ENCODE measurements at regions of chr20 and their contacts with region 1.

Region 1: DNA sequence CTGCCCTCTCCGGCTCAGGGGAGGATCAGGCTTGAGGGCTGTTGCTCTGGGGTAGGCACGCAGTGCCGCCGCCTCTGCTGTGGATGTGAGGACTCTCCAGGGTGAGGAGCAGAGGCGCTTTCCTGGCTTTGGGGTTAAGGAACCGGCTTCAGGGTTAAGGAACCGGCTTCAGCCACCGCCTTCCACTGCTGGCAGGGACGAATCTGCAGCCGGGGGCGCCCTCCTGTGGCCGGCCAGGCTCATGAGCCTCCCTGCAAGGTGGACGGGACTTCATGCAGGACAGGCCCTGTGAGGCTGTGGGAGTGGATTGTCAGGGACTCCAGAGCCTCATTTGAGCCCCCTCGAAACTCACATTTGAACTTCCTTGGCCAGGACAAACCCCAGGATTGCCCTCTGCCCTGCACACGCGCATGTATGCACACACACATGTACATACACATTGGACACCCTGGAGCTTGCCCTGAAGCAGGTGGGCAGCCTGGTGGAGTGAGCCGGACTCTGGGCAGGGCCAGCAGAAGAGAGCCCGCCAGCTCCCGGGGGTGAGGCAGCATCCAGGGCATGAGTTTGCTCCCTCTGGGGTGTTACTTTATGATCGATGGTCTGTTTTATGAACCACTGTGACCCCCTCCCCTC is 146.8 kb downstream of the PHACTR3 start:
- DNase-seq: peak; percentile 57 to 87 (median 74)
- ATAC-seq: peak; percentile 48 to 76 (median 69)
- H3K4me3 ChIP-seq: no peak overlapping the region
- H3K27ac ChIP-seq: peak overlapping the region in 1 of 12 donors; percentile 76
- H3K4me1 ChIP-seq: peaks cover 0 to 46% (median 20%) of the 10 kb centered on the region in 12 donors
- H3K27me3 ChIP-seq: peaks cover 0 to 57% (median 7%) of the 10 kb centered on the region in 9 donors
- CTCF ChIP-seq: peak; percentile 60 to 82 (median 77)
- POLR2A ChIP-seq: no peak

Region 2: DNA sequence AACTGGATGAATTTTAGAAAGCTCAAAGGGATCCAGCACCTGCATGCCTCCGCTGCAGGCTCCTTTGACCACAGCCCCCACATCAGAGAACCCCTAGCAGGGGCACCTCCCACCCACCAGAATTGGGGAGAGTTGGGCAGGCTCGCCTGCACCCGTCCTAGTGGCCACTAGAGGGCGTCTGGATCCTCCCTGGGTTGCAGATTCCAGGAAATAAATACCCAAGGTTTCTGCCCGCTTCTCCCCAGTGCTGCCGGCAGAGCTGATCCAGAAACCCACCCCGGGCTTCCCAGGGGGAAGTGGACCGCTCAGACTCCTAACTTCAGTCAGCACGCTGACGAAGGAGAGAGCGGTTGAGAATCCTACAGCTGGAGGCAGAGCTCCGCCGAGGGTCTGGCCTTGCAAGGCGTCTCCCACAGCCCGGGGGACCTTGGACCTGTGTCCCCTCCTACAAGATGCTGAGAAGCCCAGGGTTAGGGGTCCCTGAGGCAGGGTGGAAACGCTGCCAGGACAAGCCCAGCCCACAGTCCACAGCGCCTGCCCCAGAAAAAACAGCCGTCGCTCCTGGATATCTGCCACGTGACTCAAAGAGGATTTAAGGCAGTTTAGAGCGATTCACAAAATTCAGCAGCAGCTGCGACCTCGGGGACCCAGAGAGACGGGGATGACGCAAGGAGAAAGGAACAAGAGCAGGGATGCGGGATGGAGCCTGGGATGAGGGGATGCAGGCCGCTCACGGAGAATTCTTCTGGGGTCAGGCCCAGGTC is 179.4 kb before region 1 on chr20:
- intact Hi-C with region 1: loop called in 8 of 10 experiments (anchors 1 to 5 kb)
- DNase-seq: peak; percentile 47 to 77 (median 71)
- ATAC-seq: peak; percentile 44 to 77 (median 64)
- H3K4me3 ChIP-seq: peak overlapping the region in 11 of 12 donors; percentile 10 to 55 (median 43)
- H3K27ac ChIP-seq: peak overlapping the region in 8 of 12 donors; percentile 6 to 53 (median 40)
- H3K4me1 ChIP-seq: peaks cover 0 to 9% (median 0%) of the 10 kb centered on the region in 12 donors
- H3K27me3 ChIP-seq: peaks cover 0 to 56% (median 7%) of the 10 kb centered on the region in 9 donors
- CTCF ChIP-seq: peak; percentile 88 to 98 (median 96)
- POLR2A ChIP-seq: no peak

Region 3: GRCh38 chr20:59598625-59599310 is 152.4 kb before region 1 on chr20:
- intact Hi-C with region 1: loop called (anchors 1 to 5 kb)
- DNase-seq: peak in 2 of 5 donors; percentile 28 to 32
- ATAC-seq: peak in 3 of 4 donors; percentile 54 to 71 (median 68)
- H3K4me3 ChIP-seq: no peak overlapping the region
- H3K27ac ChIP-seq: no peak overlapping the region
- H3K4me1 ChIP-seq: peaks cover 0 to 6% (median 0%) of the 10 kb centered on the region in 12 donors
- H3K27me3 ChIP-seq: peaks cover 3 to 48% (median 18%) of the 10 kb centered on the region in 9 donors
- CTCF ChIP-seq: peak; percentile 48 to 78 (median 69)
- POLR2A ChIP-seq: no peak

Region 4: DNA sequence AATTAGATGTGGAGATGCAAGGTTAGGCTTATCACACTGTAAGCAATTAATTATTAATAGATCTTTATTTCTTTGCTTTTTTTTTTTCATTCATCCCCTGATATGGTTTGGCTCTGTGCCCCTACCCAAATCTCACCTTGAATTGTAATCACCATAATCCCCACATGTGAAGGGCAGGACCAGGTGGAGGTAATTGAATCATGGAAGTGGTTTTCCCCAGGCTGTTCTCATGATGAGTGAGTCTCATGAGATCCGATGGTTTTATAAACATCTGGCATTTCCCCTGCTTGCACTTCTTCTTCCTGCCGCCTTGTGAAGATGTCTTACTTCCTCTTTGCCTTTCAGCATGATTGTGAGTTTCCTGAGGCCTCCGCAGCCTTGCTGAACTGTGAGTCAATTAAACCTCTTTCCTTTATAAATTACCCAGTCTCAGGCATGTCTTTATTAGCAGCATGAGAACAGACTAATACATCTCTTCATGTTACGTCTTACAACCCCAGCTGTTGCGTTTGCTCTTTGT is 540.9 kb after region 1 on chr20:
- intact Hi-C with region 1: no loop called
- DNase-seq: no peak
- ATAC-seq: no peak
- H3K4me3 ChIP-seq: no peak overlapping the region
- H3K27ac ChIP-seq: no peak overlapping the region
- H3K4me1 ChIP-seq: no peaks in the 10 kb centered on the region
- H3K27me3 ChIP-seq: peaks cover 0 to 3% (median 0%) of the 10 kb centered on the region in 9 donors
- CTCF ChIP-seq: no peak
- POLR2A ChIP-seq: no peak

Region 5: DNA sequence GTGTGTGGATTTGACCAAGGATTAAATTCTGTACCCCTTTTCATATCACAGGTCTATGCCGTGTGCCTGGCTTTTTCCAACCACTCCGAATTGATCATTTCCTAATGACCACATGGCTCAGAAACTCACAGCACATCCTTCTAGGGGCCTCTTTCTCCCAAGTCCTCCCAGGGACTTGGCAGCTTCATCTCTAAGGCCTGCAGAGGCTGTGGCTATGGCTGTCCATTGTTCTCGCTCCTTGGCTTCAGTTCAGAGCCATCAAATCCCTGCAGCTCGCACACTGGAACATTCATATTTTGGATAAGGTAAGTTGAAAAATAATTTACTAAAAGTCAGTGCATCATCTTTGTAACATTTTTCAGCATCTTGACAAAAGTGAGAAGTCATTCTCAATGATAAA is 1003.7 kb after region 1 on chr20:
- intact Hi-C with region 1: no loop called
- DNase-seq: no peak
- ATAC-seq: no peak
- H3K4me3 ChIP-seq: no peak overlapping the region
- H3K27ac ChIP-seq: no peak overlapping the region
- H3K4me1 ChIP-seq: no peaks in the 10 kb centered on the region
- H3K27me3 ChIP-seq: no peaks in the 10 kb centered on the region
- CTCF ChIP-seq: no peak
- POLR2A ChIP-seq: no peak

Measured in heart left ventricle (tissue), 16 donors.